ENCODE measurements at regions of chr19 and their contacts with region 1.

Region 1: GRCh38 chr19:10758978-10759377 is 41.1 kb downstream of the DNM2 start:
- DNase-seq: no peak
- H3K4me3 ChIP-seq: peak overlapping the region; percentile 66
- H3K27ac ChIP-seq: peak overlapping the region; percentile 94
- H3K4me1 ChIP-seq: peaks cover 42% of the 10 kb centered on the region
- CTCF ChIP-seq: no peak

Region 2: GRCh38 chr19:10730923-10731322 is 28.1 kb before region 1 on chr19:
- CTCF ChIA-PET with region 1: no interaction called
- POLR2A ChIA-PET with region 1: interaction called, 4 read pairs
- intact Hi-C with region 1: loop called (anchors 2 kb)
- DNase-seq: no peak
- H3K4me3 ChIP-seq: no peak overlapping the region
- H3K27ac ChIP-seq: peak overlapping the region; percentile 73
- H3K4me1 ChIP-seq: peaks cover 37% of the 10 kb centered on the region
- CTCF ChIP-seq: no peak

Region 3: GRCh38 chr19:10776900-10777650 is 18.1 kb after region 1 on chr19:
- CTCF ChIA-PET with region 1: no interaction called
- POLR2A ChIA-PET with region 1: interaction called, 8 read pairs
- intact Hi-C with region 1: loop called (anchors 1 kb)
- DNase-seq: peak; percentile 84
- H3K4me3 ChIP-seq: peak overlapping the region; percentile 37
- H3K27ac ChIP-seq: peak overlapping the region; percentile 97
- H3K4me1 ChIP-seq: peaks cover 57% of the 10 kb centered on the region
- CTCF ChIP-seq: no peak

Region 4: DNA sequence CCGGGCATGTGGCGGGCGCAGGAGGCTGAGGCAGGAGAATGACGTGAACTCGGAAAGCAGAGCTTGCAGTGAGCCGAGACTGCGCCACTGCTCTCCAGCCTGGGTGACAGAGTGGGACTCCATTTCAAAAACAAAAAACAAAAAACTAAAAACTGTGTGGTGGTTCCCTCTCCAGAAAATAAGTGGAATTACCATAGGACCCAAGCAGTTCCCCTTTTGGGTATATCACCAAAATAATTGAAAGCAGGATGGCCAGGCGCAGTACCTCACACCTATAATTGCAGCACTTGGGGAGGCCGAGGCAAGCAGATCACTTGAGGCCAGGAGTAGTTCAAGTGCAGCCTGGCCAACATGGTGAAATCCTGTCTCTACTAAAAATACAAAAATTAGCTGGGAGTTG is 314.6 kb after region 1 on chr19:
- CTCF ChIA-PET with region 1: no interaction called
- POLR2A ChIA-PET with region 1: no interaction called
- intact Hi-C with region 1: no loop called
- DNase-seq: no peak
- H3K4me3 ChIP-seq: no peak overlapping the region
- H3K27ac ChIP-seq: no peak overlapping the region
- H3K4me1 ChIP-seq: peaks cover 9% of the 10 kb centered on the region
- CTCF ChIP-seq: no peak

Measured in OCI-LY7 (cell line).